ENCODE measurements at regions of chr12 and their contacts with region 1.

Region 1: GRCh38 chr12:52884526-52885293 is 20.2 kb downstream of the KRT8 start:
- DNase-seq: peak; percentile 74 to 82
- ATAC-seq: peak; percentile 62 to 65; a peak in 5 of 6 replicates
- H3K4me3 ChIP-seq: no peak overlapping the region
- H3K27ac ChIP-seq: peak overlapping the region; percentile 55 to 83
- H3K4me1 ChIP-seq: peaks cover 33% of the 10 kb centered on the region
- CTCF ChIP-seq: peak; percentile 98
- EP300 ChIP-seq: no peak
- POLR2A ChIP-seq: no peak
- RAD21 ChIP-seq: peak; percentile 100

Region 2: GRCh38 chr12:52023182-52023975 is 861.3 kb before region 1 on chr12:
- CTCF ChIA-PET with region 1: interaction called, 20 read pairs
- POLR2A ChIA-PET with region 1: interaction called, 3 read pairs
- DNase-seq: peak; percentile 94 to 95
- ATAC-seq: peak; percentile 63 to 79
- H3K4me3 ChIP-seq: peak overlapping the region; percentile 71
- H3K27ac ChIP-seq: peak overlapping the region; percentile 83 to 93
- H3K4me1 ChIP-seq: peaks cover 32% of the 10 kb centered on the region
- CTCF ChIP-seq: peak; percentile 93
- EP300 ChIP-seq: no peak
- POLR2A ChIP-seq: peak; percentile 37
- RAD21 ChIP-seq: peak; percentile 88 to 95

Region 3: GRCh38 chr12:52903285-52903854 is 18.7 kb after region 1 on chr12:
- CTCF ChIA-PET with region 1: interaction called, 440 read pairs
- POLR2A ChIA-PET with region 1: interaction called, 18 read pairs
- DNase-seq: peak; percentile 50 to 69
- ATAC-seq: peak; percentile 26 to 39; a peak in 5 of 6 replicates
- H3K4me3 ChIP-seq: peak overlapping the region; percentile 87
- H3K27ac ChIP-seq: peak overlapping the region; percentile 91 to 99
- H3K4me1 ChIP-seq: peaks cover 72% of the 10 kb centered on the region
- CTCF ChIP-seq: no peak
- EP300 ChIP-seq: no peak
- POLR2A ChIP-seq: peak; percentile 9; the same call in 1 of the 2 replicates
- RAD21 ChIP-seq: 0 out of 5 replicates have a peak, but pooled peaks of 1 of the 2 experiments have one; percentile 2

Region 4: DNA sequence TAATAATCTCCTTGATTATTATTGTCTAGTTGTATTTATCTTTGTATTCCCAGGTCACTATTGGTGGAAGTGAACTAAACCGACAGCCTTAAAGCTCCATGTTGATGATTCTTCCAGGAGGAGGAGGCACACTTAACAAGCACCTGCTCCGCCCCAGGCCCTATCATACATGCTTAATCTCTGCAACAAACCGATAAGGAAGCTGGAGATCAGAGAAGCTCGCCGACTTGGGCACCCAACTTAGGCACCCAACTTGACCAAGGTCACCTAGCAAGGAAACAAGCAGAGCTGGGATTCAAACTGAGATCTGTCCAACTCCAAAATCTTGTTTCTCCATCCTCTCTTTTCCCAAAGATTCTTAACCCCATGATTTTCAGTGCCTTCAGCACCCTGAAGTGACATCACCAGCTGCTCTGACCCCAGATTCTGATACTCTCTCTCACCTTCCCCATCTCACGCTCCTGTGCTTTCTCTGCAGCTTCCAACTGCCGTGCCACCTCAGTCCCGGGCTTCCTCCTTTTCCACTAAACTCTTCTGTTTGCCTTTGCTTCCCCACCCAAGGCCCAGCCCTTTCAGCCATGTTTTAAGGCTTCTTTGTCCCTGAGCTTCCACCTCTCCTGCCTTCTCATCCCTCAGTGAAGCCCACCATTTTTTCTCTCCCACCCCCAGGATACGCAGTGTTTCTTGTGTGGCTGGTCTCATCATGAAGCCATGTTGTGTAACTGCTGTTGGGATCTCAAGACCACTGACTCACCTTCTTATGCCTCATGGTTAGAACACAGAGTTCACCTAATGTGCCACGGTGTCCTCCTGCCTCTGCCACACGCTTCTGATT is 57.6 kb after region 1 on chr12:
- CTCF ChIA-PET with region 1: interaction called, 45 read pairs
- POLR2A ChIA-PET with region 1: no interaction called
- DNase-seq: no peak
- ATAC-seq: no peak
- H3K4me3 ChIP-seq: no peak overlapping the region
- H3K27ac ChIP-seq: peak overlapping the region; percentile 96 to 97
- H3K4me1 ChIP-seq: peaks cover 50% of the 10 kb centered on the region
- CTCF ChIP-seq: no peak
- EP300 ChIP-seq: no peak
- POLR2A ChIP-seq: no peak
- RAD21 ChIP-seq: no peak

Region 5: GRCh38 chr12:53005986-53006809 is 121.5 kb after region 1 on chr12 and contains the start of gene EIF4B:
- CTCF ChIA-PET with region 1: interaction called, 18 read pairs
- POLR2A ChIA-PET with region 1: interaction called, 4 read pairs
- DNase-seq: peak; percentile 96 to 100
- ATAC-seq: peak; percentile 94 to 95
- H3K4me3 ChIP-seq: peak within 1 kb of the TSS; percentile 88
- H3K27ac ChIP-seq: peak within 1 kb of the TSS; percentile 95 to 99
- H3K4me1 ChIP-seq: peaks cover 47% of the 10 kb centered on the region
- CTCF ChIP-seq: no peak
- EP300 ChIP-seq: peak in 1 of 2 experiments; percentile 3; a peak in 1 of 5 replicates
- POLR2A ChIP-seq: peak; percentile 63
- RAD21 ChIP-seq: no peak
- polyA plus RNA-seq, gene EIF4B: 577 and 650 TPM in 2 replicates

Region 6: GRCh38 chr12:53031617-53032016 is 146.9 kb after region 1 on chr12:
- CTCF ChIA-PET with region 1: interaction called, 10 read pairs
- POLR2A ChIA-PET with region 1: no interaction called
- DNase-seq: no peak
- ATAC-seq: peak; percentile 66 to 77; a peak in 5 of 6 replicates
- H3K4me3 ChIP-seq: no peak overlapping the region
- H3K27ac ChIP-seq: no peak overlapping the region
- H3K4me1 ChIP-seq: no peaks in the 10 kb centered on the region
- CTCF ChIP-seq: peak; percentile 26; the same call in 2 of the 3 replicates
- EP300 ChIP-seq: no peak
- POLR2A ChIP-seq: no peak
- RAD21 ChIP-seq: peak in 1 of 2 experiments; percentile 19; a peak in 1 of 5 replicates

Region 7: DNA sequence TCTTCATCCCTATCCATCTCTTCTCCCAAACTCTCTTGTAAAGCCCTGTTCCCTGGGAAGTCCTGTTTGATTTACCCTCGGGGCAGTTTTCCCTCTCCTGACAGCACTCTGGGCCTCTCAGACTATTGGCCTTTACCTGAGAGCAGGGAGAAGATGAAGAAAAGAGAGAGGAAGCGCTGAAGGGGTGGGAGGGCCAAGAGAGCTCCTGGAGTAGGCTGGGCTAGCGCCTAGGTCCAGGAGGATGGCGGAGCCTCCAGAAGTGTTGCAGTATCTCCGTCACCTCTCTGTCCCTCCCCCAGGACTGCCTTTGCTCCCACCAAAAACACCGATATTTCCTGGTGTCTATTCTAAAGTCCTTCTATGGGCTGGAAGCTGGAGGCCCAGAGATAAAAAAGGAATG is 207.0 kb after region 1 on chr12:
- CTCF ChIA-PET with region 1: no interaction called
- POLR2A ChIA-PET with region 1: no interaction called
- DNase-seq: no peak
- ATAC-seq: no peak
- H3K4me3 ChIP-seq: no peak overlapping the region
- H3K27ac ChIP-seq: no peak overlapping the region
- H3K4me1 ChIP-seq: peaks cover 20% of the 10 kb centered on the region
- CTCF ChIP-seq: no peak
- EP300 ChIP-seq: no peak
- POLR2A ChIP-seq: no peak
- RAD21 ChIP-seq: no peak

Region 8: DNA sequence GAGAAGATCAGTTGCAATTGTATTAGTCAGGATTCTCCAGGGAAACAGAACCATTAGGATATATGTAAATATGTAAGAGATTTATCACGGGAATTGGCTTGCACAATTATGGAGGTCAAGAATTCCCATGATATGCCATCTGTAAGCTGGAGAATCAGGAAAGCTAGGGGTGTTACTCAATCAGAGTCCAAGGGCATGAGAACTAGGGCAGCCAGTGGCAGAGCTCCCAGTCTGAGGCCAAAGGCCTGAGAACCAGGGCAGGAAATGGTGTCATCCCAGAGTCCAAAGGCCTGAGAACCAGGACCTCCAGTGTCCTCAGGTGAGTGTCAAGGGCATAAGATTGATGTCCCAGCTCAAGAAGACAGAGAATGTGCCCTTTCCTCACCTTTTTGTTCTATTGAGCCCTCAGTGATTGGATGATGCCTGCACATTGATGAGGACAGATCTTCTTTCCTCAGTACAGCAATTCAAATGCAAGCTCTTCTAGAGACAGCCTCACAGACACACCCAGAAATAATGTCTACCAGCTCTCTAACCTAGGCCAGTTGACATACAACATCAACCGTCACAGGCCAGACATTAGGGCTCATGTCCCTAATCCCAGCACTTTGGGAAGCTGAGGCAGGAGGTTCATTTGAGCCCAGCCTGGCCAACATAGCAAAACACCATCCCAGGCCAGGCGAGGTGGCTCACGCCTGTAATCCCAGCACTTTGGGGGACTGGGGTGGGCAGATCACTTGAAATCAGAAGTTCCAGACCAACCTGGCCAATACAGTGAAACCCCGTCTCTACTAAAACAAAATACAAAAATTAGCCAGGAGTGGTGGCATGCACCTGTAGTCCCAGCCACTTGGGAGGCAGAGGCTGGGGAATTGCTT is 260.9 kb after region 1 on chr12:
- CTCF ChIA-PET with region 1: no interaction called
- POLR2A ChIA-PET with region 1: no interaction called
- DNase-seq: no peak
- ATAC-seq: peak in 1 of 2 experiments; percentile 29; a peak in 2 of 6 replicates
- H3K4me3 ChIP-seq: no peak overlapping the region
- H3K27ac ChIP-seq: no peak overlapping the region
- H3K4me1 ChIP-seq: no peaks in the 10 kb centered on the region
- CTCF ChIP-seq: no peak
- EP300 ChIP-seq: no peak
- POLR2A ChIP-seq: no peak
- RAD21 ChIP-seq: no peak